ENCODE measurements at regions of chr7 and their contacts with region 1.

Region 1: DNA sequence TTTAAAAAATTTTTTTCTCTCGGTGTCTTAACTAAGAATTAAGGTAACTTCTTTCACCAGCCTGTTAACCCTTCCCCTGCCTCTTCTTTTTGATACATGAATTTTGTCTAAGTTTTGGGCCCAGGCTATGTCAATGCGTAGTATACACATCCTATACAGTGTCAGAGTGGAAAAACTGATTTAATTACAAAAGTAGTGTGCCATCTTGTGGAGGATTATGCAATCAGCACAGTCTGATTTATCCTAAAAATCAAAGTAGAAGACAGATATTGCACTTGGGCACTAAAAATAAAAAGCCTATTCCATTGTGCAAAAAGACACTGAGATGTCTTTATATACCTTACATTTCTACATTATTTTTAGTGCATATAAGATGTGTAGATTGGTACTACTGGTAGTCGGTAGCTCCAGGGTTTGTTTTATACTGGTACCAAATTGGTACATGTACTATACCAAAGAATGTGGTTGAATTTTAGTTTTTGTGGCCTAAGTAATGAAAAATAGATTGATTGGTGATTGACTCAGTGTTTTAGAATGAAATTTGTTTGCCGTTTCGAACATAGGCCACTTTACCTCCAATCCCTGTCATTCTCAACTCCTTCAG is 96.6 kb downstream of the MKLN1 start:
- DNase-seq: peak in 1 of 2 experiments; percentile 43
- H3K4me3 ChIP-seq: no peak overlapping the region
- H3K27ac ChIP-seq: peak overlapping the region; percentile 36; the same call in 1 of the 2 replicates
- H3K4me1 ChIP-seq: no peaks in the 10 kb centered on the region
- H3K27me3 ChIP-seq: no peaks in the 10 kb centered on the region
- CTCF ChIP-seq: peak; percentile 69

Region 2: GRCh38 chr7:131071786-131072504 is 352.4 kb before region 1 on chr7:
- CTCF ChIA-PET with region 1: no interaction called
- POLR2A ChIA-PET with region 1: no interaction called
- intact Hi-C with region 1: loop called (anchors 2 kb)
- DNase-seq: no peak
- H3K4me3 ChIP-seq: no peak overlapping the region
- H3K27ac ChIP-seq: no peak overlapping the region
- H3K4me1 ChIP-seq: peaks cover 3% of the 10 kb centered on the region
- H3K27me3 ChIP-seq: no peaks in the 10 kb centered on the region
- CTCF ChIP-seq: peak; percentile 60; the same call in 1 of the 2 replicates

Region 3: GRCh38 chr7:131170440-131171105 is 253.7 kb before region 1 on chr7:
- CTCF ChIA-PET with region 1: interaction called, 5 read pairs
- POLR2A ChIA-PET with region 1: interaction called, 8 read pairs
- intact Hi-C with region 1: loop called (anchors 5 kb)
- DNase-seq: no peak
- H3K4me3 ChIP-seq: no peak overlapping the region
- H3K27ac ChIP-seq: peak overlapping the region; percentile 26; the same call in 1 of the 2 replicates
- H3K4me1 ChIP-seq: peaks cover 48% of the 10 kb centered on the region
- H3K27me3 ChIP-seq: no peaks in the 10 kb centered on the region
- CTCF ChIP-seq: no peak

Region 4: DNA sequence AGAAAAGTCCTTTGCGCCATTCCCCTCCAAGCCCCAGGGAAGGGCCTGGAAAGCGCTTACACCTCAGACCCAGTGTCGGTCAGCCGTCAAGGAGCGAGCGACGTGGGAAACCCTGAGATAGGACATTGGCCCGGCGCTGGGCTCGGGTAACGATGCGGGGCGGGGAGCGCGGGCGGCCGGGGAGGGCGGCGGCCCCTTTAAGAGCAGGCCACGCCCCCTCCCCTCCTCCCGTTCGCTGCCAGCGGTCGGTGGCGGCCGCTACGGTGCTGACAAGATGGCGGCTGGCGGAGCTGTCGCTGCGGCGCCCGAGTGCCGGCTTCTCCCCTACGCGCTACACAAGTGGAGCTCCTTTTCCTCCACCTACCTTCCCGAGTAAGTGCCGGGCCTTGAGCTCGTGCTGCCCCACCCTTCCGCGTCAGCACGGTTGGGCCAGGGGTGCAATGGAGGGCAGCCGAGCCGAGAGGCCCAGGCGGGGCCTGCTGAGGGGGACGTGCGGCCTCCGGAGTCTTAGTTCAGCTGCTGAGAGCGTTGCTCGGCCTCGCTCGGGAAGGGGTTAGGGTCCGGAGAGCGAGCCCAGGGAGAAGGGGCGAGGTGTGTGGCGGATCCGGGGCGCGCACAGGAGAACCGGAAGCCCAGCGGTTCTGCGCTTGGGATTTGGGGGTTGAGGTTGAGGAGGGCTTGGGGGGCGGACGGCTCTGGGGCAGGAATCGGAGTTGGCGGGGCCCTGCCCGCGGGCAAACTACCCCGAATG is 96.5 kb before region 1 on chr7 and contains the start of gene MKLN1:
- CTCF ChIA-PET with region 1: no interaction called
- POLR2A ChIA-PET with region 1: no interaction called
- intact Hi-C with region 1: loop called (anchors 5 kb)
- DNase-seq: peak; percentile 75 to 91
- H3K4me3 ChIP-seq: peak within 1 kb of the TSS; percentile 91
- H3K27ac ChIP-seq: peak within 1 kb of the TSS; percentile 76
- H3K4me1 ChIP-seq: peaks cover 48% of the 10 kb centered on the region
- H3K27me3 ChIP-seq: no peaks in the 10 kb centered on the region
- CTCF ChIP-seq: no peak
- total RNA-seq, gene MKLN1: 60.1 and 61.1 TPM in 2 replicates

Region 5: DNA sequence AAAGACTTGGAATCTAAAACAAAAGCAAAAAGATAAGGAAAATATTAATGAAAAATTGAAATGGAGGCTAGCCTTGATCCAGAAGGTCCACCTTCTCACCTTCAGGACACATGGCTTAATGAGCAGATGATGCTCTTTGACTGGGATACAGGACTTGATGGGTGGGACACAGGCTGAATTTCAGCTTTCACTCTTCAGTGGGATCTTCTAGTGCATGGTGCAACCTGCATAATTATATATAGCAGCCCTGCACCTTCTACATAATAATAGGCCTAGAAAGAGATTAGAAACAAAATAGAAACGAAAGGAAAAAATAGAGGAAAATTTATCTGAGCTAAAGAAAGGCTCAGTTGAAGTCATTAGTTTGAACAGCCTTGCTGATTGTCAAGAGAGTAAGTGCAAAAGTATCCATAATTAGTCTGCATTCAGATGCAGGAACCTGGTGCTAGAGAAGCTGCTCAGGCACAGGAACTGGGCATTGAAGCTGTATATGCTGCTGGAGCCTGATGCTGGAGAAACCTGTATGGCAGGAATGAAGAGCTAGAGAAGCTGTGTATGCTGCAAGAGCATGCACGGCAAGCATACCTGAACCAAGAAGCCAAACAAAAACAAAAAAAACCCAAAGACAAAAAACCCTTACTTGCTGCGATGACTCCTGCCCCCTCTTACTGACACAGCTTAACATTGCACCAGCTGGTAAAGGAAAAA is 77.3 kb before region 1 on chr7:
- CTCF ChIA-PET with region 1: no interaction called
- POLR2A ChIA-PET with region 1: no interaction called
- intact Hi-C with region 1: loop called (anchors 5 kb)
- DNase-seq: peak; percentile 75 to 90
- H3K4me3 ChIP-seq: no peak overlapping the region
- H3K27ac ChIP-seq: peak overlapping the region; percentile 45
- H3K4me1 ChIP-seq: peaks cover 20% of the 10 kb centered on the region
- H3K27me3 ChIP-seq: no peaks in the 10 kb centered on the region
- CTCF ChIP-seq: no peak

Region 6: DNA sequence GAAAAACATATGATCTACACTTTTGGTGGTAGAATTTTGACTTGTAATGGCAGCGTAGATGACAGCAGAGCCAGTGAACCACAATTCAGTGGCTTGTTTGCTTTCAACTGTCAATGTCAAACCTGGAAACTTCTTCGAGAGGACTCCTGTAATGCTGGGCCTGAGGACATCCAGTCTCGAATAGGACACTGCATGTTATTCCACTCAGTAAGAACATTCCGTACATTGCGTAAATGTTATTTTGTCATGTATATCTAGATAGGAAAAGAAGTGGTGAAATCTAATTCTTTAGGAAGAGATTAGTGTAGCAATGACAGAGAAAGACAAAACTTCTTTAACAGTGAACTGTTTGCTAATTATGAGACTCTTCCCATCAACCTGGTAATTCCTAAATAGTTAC is 19.2 kb after region 1 on chr7:
- CTCF ChIA-PET with region 1: interaction called, 17 read pairs
- POLR2A ChIA-PET with region 1: no interaction called
- intact Hi-C with region 1: no loop called
- DNase-seq: no peak
- H3K4me3 ChIP-seq: no peak overlapping the region
- H3K27ac ChIP-seq: no peak overlapping the region
- H3K4me1 ChIP-seq: no peaks in the 10 kb centered on the region
- H3K27me3 ChIP-seq: no peaks in the 10 kb centered on the region
- CTCF ChIP-seq: no peak